Activated B cell treated with CpG ODN at 0.5 μM for 24 hours (primary cell): ENCODE measurements at regions of chr4 and their contacts with region 1.

Region 1: DNA sequence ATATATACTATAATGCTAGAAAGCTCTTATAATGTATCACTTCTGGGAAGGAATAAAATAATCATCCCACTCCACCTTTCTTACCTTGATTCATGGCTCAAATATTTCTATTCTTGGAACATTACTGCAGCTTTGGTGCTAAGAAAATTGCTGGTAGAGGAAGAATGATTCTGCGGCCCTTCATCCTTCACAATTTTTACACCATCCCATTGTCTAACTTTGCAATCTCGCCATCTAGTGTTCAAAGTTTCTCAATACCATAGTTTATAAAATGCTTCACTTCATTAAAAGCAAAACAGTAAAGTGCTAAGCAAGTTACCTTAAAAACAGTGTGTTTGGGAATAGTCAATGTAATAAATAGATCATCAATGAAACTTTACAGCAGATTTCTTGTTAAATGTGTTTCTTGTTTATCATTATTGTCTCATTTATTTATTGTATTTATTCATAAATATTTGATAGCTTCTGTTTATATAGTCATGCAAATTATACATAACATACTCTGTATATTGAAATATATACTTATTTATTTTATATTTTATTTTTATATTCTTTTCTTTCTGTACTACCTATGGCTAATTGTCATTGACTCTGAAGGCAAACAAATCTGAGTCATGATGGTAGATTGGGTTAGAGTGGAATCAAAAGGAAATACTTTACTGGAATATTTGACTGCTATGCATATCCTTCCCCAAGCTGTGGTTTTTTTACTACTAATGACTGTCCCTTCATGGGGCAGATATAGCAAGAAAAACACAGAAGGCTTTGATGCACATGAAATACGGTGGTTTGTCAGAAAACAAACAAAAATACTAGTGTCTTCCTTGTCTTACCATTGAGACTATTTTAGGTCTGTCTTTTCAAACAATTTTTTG is 390.7 kb downstream of the MAPK10 start:
- DNase-seq: no peak
- ATAC-seq: no peak
- H3K4me3 Mint-ChIP-seq: no peak overlapping the region
- H3K27ac Mint-ChIP-seq: no peak overlapping the region
- H3K4me1 Mint-ChIP-seq: peaks cover 10% of the 10 kb centered on the region
- H3K27me3 Mint-ChIP-seq: no peaks in the 10 kb centered on the region
- CTCF ChIP-seq: no peak

Region 2: DNA sequence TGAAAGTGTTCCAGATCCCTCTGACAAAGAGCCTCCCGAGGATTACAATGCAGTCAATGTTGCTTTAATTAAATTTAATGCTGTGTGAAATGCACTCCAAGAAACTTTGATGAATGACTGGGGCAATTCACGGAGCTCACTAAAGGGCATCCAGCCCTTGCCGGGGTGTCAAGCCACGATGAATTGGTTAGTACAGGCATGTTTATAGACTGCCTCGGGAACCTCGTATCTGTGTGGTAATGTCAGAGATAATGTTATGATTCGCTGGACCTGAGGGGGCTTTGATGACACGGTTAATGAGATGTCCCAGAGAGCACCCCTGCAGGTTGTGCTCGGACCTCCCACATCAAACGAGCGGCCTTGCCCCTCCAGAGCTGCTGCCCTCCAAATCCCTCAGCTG is 1898.9 kb before region 1 on chr4:
- CTCF ChIA-PET with region 1: no interaction called
- POLR2A ChIA-PET with region 1: no interaction called
- intact Hi-C with region 1: no loop called
- DNase-seq: no peak
- ATAC-seq: no peak
- H3K4me3 Mint-ChIP-seq: no peak overlapping the region
- H3K27ac Mint-ChIP-seq: no peak overlapping the region
- H3K4me1 Mint-ChIP-seq: no peaks in the 10 kb centered on the region
- H3K27me3 Mint-ChIP-seq: no peaks in the 10 kb centered on the region
- CTCF ChIP-seq: no peak

Region 3: DNA sequence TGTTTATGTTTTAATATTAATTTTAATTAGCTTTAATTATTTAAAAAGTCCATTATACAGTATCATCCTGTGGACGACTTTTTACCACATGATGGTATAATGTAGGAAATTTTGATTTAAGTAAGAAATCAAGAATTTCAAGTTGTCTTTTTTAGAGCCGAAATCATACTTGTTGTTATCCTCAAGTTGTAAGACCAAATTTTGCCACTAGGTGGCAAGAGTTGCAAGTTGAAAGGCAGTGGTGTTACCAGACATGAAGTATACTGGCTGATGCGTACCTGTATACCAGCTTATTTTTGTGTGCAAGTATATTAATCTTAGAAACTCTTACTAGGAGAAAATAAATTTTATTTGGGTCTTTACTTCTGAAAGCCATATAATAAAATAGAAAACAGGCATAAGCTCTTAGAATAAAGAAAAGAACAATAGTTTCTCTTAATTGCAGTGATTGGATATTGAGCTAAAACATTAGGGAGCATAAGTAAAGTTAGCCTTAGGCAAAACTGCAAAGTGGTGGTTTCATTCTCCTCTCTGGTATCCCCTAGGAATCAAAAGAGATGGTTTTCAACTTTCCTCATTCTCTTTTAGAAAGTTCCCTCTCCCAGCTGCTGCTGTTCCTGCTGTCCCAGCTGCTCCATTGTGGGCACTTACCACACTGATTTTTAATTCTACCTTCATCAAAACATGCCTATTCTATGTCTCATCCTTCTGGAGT is 884.6 kb before region 1 on chr4:
- CTCF ChIA-PET with region 1: interaction called, 32 read pairs
- POLR2A ChIA-PET with region 1: no interaction called
- intact Hi-C with region 1: loop called (anchors 1 kb)
- DNase-seq: no peak
- ATAC-seq: peak; percentile 56
- H3K4me3 Mint-ChIP-seq: no peak overlapping the region
- H3K27ac Mint-ChIP-seq: no peak overlapping the region
- H3K4me1 Mint-ChIP-seq: peaks cover 5% of the 10 kb centered on the region
- H3K27me3 Mint-ChIP-seq: peaks cover 7% of the 10 kb centered on the region
- CTCF ChIP-seq: no peak

Region 4: GRCh38 chr4:85147439-85148076 is 821.6 kb before region 1 on chr4:
- CTCF ChIA-PET with region 1: interaction called, 37 read pairs
- POLR2A ChIA-PET with region 1: no interaction called
- intact Hi-C with region 1: loop called (anchors 1 kb)
- DNase-seq: no peak
- ATAC-seq: peak; percentile 86
- H3K4me3 Mint-ChIP-seq: no peak overlapping the region
- H3K27ac Mint-ChIP-seq: no peak overlapping the region
- H3K4me1 Mint-ChIP-seq: peaks cover 5% of the 10 kb centered on the region
- H3K27me3 Mint-ChIP-seq: no peaks in the 10 kb centered on the region
- CTCF ChIP-seq: peak; percentile 40

Region 5: GRCh38 chr4:85370430-85371032 is 598.7 kb before region 1 on chr4:
- CTCF ChIA-PET with region 1: no interaction called
- POLR2A ChIA-PET with region 1: no interaction called
- intact Hi-C with region 1: loop called (anchors 5 kb)
- DNase-seq: peak; percentile 23
- ATAC-seq: peak; percentile 94
- H3K4me3 Mint-ChIP-seq: peak overlapping the region; percentile 33
- H3K27ac Mint-ChIP-seq: peak overlapping the region; percentile 50
- H3K4me1 Mint-ChIP-seq: peaks cover 29% of the 10 kb centered on the region
- H3K27me3 Mint-ChIP-seq: no peaks in the 10 kb centered on the region
- CTCF ChIP-seq: no peak

Region 6: DNA sequence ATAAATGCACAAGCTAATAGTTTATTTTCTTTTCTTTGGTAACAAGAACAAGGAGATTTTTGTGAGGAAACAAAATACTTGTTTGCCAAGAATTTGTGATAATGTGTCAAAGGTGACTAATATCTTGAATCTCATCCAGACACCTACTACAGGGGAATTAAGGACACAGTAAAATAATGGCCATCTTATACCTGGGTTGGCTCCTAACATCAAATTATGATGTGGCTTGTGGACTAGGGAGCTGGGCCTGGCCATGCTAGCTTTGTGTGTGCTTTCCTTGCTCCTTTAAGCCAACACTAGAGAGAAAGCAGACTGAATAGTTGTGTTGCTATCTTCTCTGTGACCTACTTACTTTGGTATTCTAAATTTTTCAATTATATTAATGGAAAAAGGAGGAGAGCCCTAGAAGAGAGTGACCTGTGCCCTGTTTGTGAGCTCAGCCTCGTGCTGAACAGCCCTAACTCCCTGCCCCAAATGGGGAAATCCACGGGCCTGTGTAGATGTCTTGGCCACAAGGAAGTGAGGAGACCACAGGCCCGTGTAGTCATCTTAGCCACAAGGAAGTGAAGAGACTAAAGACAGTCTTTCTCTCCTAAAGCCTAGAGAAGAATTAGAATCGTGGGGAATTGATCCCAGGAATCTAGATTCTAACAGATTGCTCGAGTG is 471.0 kb before region 1 on chr4:
- CTCF ChIA-PET with region 1: no interaction called
- POLR2A ChIA-PET with region 1: no interaction called
- intact Hi-C with region 1: loop called (anchors 10 kb)
- DNase-seq: peak; percentile 35
- ATAC-seq: peak; percentile 98
- H3K4me3 Mint-ChIP-seq: peak overlapping the region; percentile 44
- H3K27ac Mint-ChIP-seq: peak overlapping the region; percentile 81
- H3K4me1 Mint-ChIP-seq: peaks cover 75% of the 10 kb centered on the region
- H3K27me3 Mint-ChIP-seq: no peaks in the 10 kb centered on the region
- CTCF ChIP-seq: no peak

Region 7: DNA sequence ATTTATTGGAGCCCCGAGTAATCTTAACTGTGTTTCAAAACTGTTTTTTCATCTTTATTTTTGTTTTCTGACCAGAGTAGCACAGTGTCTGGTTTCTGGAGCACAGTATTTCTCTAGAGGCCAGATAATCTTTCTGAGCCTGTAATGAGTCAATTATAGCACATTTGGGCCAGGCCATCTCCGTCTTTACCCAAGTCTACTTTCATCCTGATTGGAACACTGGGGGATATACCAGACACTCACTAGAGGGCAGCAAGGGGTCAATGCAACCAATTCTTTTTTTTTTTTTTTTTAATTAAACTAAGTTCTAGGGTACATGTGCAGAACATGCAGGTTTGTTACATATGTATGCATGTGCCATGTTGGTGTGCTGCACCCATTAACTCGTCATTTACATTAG is 212.2 kb before region 1 on chr4:
- CTCF ChIA-PET with region 1: interaction called, 7 read pairs
- POLR2A ChIA-PET with region 1: no interaction called
- intact Hi-C with region 1: loop called (anchors 2 kb)
- DNase-seq: no peak
- ATAC-seq: peak; percentile 31
- H3K4me3 Mint-ChIP-seq: no peak overlapping the region
- H3K27ac Mint-ChIP-seq: no peak overlapping the region
- H3K4me1 Mint-ChIP-seq: peaks cover 14% of the 10 kb centered on the region
- H3K27me3 Mint-ChIP-seq: no peaks in the 10 kb centered on the region
- CTCF ChIP-seq: no peak